ENCODE measurements at regions of chr7 and their contacts with region 1.

Region 1: GRCh38 chr7:92833024-92833765 is 3.2 kb downstream of the CDK6 start:
- DNase-seq: peak; percentile 82
- H3K4me3 ChIP-seq: peak overlapping the region; percentile 83 to 87 (median 83)
- H3K27ac ChIP-seq: peak overlapping the region; percentile 94
- H3K4me1 ChIP-seq: peaks cover 35% of the 10 kb centered on the region
- H3K27me3 ChIP-seq: no peaks in the 10 kb centered on the region
- CTCF ChIP-seq: peak; percentile 71 to 91

Region 2: GRCh38 chr7:92528188-92528957 is 304.8 kb before region 1 on chr7 and contains the starts of genes PEX1 and RBM48:
- CTCF ChIA-PET with region 1: interaction called, 3 read pairs
- dilution Hi-C with region 1: no loop called
- in situ Hi-C with region 1: no loop called
- intact Hi-C with region 1: loop called (anchors 5 kb)
- DNase-seq: peak; percentile 99
- H3K4me3 ChIP-seq: peak within 1 kb of the TSS; percentile 76 to 99 (median 98)
- H3K27ac ChIP-seq: peak within 1 kb of the TSS; percentile 86
- H3K4me1 ChIP-seq: no peaks in the 10 kb centered on the region
- H3K27me3 ChIP-seq: no peaks in the 10 kb centered on the region
- CTCF ChIP-seq: peak; percentile 11 to 40
- total RNA-seq, gene PEX1: 14.4 to 24.2 TPM
- total RNA-seq, gene RBM48: 9.0 to 9.8 TPM

Region 3: GRCh38 chr7:92740700-92741126 is 92.5 kb before region 1 on chr7:
- CTCF ChIA-PET with region 1: no interaction called
- dilution Hi-C with region 1: no loop called
- in situ Hi-C with region 1: no loop called
- intact Hi-C with region 1: loop called (anchors 2 kb)
- DNase-seq: peak; percentile 94
- H3K4me3 ChIP-seq: no peak overlapping the region
- H3K27ac ChIP-seq: peak overlapping the region; percentile 70
- H3K4me1 ChIP-seq: peaks cover 34% of the 10 kb centered on the region
- H3K27me3 ChIP-seq: no peaks in the 10 kb centered on the region
- CTCF ChIP-seq: no peak

Region 4: DNA sequence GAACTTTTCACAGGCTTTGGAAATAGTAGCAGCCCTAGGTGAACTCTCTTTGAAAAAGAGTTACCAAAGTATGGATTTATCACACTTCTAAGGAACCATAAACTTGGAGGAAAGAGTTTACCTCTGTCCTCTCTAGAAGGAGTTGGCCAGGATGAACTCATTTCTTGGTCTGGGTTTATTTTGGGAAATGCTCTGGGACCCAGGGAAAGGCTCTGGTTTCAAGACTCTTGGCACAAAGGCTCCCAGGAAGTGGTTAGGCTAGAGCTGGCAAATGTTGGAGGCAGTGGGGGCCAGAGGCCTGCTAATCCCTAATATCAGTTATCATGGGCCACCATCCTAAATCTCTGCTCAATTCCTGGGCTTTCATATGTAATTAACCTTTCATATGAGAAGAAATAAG is 39.5 kb after region 1 on chr7:
- CTCF ChIA-PET with region 1: no interaction called
- dilution Hi-C with region 1: no loop called
- in situ Hi-C with region 1: no loop called
- intact Hi-C with region 1: no loop called
- DNase-seq: peak; percentile 27
- H3K4me3 ChIP-seq: no peak overlapping the region
- H3K27ac ChIP-seq: peak overlapping the region; percentile 42
- H3K4me1 ChIP-seq: peaks cover 26% of the 10 kb centered on the region
- H3K27me3 ChIP-seq: no peaks in the 10 kb centered on the region
- CTCF ChIP-seq: no peak

Region 5: GRCh38 chr7:92904292-92905131 is 71.3 kb after region 1 on chr7:
- CTCF ChIA-PET with region 1: no interaction called
- dilution Hi-C with region 1: no loop called
- in situ Hi-C with region 1: no loop called
- intact Hi-C with region 1: loop called (anchors 1 kb)
- DNase-seq: peak; percentile 98
- H3K4me3 ChIP-seq: no peak overlapping the region
- H3K27ac ChIP-seq: peak overlapping the region; percentile 96
- H3K4me1 ChIP-seq: peaks cover 23% of the 10 kb centered on the region
- H3K27me3 ChIP-seq: no peaks in the 10 kb centered on the region
- CTCF ChIP-seq: no peak

Region 6: GRCh38 chr7:92973974-92974373 is 140.8 kb after region 1 on chr7:
- CTCF ChIA-PET with region 1: no interaction called
- dilution Hi-C with region 1: no loop called
- in situ Hi-C with region 1: no loop called
- intact Hi-C with region 1: loop called (anchors 5 kb)
- DNase-seq: peak; percentile 70
- H3K4me3 ChIP-seq: no peak overlapping the region
- H3K27ac ChIP-seq: peak overlapping the region; percentile 32
- H3K4me1 ChIP-seq: peaks cover 8% of the 10 kb centered on the region
- H3K27me3 ChIP-seq: no peaks in the 10 kb centered on the region
- CTCF ChIP-seq: no peak

Region 7: DNA sequence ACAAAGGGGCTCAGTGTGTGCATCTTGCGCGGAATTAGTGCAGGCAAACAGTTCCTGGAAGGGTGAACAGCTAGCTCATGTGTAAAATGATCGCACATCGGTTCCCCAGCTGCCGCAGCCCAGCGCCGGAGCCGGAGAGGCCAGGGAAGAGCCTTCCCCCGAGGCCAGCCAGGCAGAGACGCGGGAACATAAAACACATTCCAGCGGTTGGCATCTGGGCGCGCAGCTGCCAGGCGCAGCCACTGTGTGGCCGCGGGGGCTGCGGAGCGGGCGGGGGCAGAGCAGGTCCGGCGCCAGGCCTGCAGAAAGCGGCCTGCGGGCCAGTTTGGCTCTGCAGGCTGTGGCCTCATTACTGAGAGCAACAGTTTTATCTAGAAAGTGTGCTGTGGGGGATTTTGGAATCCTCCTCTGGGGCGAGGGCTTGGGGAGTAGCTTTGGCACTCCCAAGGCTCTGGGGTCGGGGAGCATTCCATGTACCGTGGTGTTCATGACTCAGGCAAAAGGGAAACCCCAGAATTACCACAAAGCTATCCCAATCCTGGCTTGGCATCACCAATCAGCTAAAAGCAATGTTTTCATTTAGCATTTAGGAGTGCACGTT is 210.3 kb after region 1 on chr7:
- CTCF ChIA-PET with region 1: no interaction called
- dilution Hi-C with region 1: no loop called
- in situ Hi-C with region 1: no loop called
- intact Hi-C with region 1: loop called (anchors 1 kb)
- DNase-seq: peak; percentile 97
- H3K4me3 ChIP-seq: peak overlapping the region; percentile 22 to 28 (median 27)
- H3K27ac ChIP-seq: peak overlapping the region; percentile 83
- H3K4me1 ChIP-seq: peaks cover 28% of the 10 kb centered on the region
- H3K27me3 ChIP-seq: no peaks in the 10 kb centered on the region
- CTCF ChIP-seq: peak in 1 of 2 donors; percentile 13

Region 8: DNA sequence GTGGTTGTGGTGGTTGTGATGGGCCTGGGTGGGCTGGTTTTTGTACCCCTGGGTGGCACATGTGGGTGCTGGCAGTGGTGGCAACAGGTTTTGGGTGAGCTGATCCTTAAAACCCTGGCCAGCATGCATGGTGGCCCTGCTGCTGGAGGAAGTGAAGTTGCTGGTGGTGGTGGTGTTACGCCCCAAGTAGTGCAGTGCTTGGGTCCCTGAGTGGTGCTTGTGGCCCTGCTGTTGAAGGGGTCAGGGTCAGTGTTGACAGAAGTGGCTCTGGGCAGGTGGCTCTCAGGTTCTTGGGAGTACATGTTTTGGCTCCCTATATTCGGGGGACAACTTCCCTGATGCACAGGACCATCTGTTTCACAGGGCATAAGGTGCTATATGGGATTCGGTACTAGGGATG is 253.6 kb after region 1 on chr7:
- CTCF ChIA-PET with region 1: no interaction called
- dilution Hi-C with region 1: no loop called
- in situ Hi-C with region 1: no loop called
- intact Hi-C with region 1: no loop called
- DNase-seq: no peak
- H3K4me3 ChIP-seq: no peak overlapping the region
- H3K27ac ChIP-seq: no peak overlapping the region
- H3K4me1 ChIP-seq: no peaks in the 10 kb centered on the region
- H3K27me3 ChIP-seq: no peaks in the 10 kb centered on the region
- CTCF ChIP-seq: no peak

Region 9: DNA sequence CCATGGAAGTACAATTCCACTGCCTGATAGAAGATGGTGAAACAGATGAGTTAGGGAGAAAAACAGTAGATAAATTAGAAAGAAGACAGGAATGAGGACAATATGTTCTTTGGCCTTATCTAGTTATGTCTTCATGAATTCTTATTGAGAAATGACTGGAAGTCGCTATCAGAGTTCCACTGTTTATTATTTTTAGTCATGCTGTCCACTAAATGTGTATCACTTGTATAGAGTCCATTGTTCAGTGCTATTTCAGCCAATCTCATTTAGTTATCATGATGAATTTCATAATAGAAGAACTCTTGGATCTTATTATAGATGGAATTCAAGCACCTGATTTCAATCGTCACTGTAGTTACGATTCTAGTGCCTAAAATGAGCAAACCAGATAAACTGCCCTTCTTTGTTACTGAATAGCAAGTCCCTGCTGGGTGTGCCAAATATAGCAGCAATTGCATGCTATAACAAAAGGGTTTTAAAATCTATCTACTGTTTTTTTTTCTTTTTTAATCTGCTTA is 1383.8 kb after region 1 on chr7:
- CTCF ChIA-PET with region 1: no interaction called
- dilution Hi-C with region 1: no loop called
- in situ Hi-C with region 1: no loop called
- intact Hi-C with region 1: no loop called
- DNase-seq: no peak
- H3K4me3 ChIP-seq: no peak overlapping the region
- H3K27ac ChIP-seq: no peak overlapping the region
- H3K4me1 ChIP-seq: no peaks in the 10 kb centered on the region
- H3K27me3 ChIP-seq: peaks cover 2% of the 10 kb centered on the region
- CTCF ChIP-seq: no peak